Calu3 (cell line): ENCODE measurements at regions of chr7 and their contacts with region 1.

Region 1: DNA sequence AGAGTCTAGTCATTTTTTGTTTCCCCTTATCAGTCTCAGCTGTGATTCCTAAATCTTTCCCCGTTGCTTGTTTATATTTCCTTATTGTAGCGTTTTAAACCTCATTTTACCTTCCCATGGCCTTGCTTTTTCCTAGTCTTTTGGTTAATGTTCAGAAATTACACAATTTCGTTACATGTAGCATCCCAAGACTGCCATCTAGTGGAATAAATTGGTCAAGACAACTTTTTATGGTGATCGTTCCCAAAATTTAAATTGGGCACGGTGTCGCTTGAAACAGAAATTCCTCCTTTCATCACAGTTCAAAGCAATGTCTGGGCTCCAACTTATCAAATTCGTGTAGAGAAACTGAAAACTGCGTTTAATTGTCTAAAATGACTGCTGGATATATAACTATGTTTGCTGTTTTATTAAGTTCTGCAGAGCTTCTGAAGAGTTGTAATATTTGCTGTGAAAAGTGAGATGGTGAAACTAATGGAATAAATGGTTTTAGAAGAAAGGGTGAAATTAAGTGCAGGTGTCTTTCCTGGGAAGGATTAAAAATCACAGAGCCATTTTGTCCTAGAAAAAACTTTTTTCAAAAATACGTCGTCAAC is 370.2 kb downstream of the PHF14 start:
- DNase-seq: peak; percentile 31
- H3K4me3 Mint-ChIP-seq: no peak overlapping the region
- H3K27ac Mint-ChIP-seq: no peak overlapping the region
- H3K4me1 Mint-ChIP-seq: peaks cover 9% of the 10 kb centered on the region
- H3K27me3 Mint-ChIP-seq: no peaks in the 10 kb centered on the region
- CTCF ChIP-seq: peak; percentile 80

Region 2: DNA sequence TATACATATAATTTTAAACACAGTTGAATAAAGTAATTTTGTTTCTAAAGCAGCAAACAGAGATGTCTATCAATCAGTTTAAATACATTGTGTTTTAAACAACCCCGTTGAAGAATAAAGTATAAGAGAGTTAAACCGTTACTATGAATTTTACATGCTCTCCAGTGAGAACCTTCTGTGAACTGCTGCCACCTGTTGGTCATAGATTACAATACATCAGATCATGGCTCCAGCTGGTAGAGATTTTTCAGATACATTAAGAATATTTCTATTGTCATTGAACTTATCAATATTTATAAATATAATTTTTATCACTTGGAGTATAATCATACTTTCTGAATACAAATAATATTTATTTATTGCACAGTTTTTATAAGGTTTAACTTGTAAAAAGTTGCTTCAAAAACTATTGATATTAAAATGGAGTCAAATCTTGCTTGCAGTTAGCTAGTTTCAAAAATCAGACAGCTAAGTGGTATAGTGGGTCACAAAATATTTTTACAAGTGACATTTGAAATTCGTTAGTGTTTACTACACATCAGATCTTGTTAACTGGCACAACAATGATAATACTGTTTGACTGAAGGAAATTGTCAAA is 931.4 kb before region 1 on chr7:
- CTCF ChIA-PET with region 1: no interaction called
- intact Hi-C with region 1: loop called (anchors 10 kb)
- DNase-seq: peak; percentile 49
- H3K4me3 Mint-ChIP-seq: no peak overlapping the region
- H3K27ac Mint-ChIP-seq: no peak overlapping the region
- H3K4me1 Mint-ChIP-seq: no peaks in the 10 kb centered on the region
- H3K27me3 Mint-ChIP-seq: no peaks in the 10 kb centered on the region
- CTCF ChIP-seq: peak; percentile 50

Region 3: DNA sequence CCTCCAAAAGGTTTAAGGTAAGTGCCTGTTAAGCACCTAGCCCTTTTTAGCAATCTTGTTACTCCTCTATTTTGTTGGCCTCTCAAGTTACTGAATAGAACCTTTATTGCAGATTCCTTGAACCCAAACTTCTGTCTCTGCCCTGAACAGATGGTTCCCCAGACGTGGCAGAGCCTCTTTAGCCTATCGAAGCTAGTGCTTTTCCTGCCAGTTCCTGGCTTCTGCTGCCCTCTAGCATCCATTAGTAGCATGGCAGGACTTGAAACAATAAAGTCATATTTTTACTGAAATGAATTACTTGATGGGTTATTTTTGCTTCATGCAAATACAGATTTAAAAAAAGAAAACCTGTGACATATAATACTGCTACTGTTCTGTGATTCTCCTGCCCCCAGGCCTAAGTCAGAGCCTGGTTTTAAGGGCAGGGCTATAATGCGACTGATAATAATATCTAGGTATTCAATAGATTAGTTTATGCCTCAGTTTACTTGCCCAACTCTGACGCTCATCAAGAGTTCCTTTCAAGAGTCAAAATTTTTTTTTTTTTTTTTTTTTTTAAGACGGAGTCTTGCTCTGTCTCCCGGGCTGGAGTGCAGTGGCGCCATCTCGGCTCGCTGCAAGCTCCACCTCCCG is 454.5 kb before region 1 on chr7:
- CTCF ChIA-PET with region 1: no interaction called
- intact Hi-C with region 1: loop called (anchors 5 kb)
- DNase-seq: peak; percentile 39
- H3K4me3 Mint-ChIP-seq: no peak overlapping the region
- H3K27ac Mint-ChIP-seq: no peak overlapping the region
- H3K4me1 Mint-ChIP-seq: no peaks in the 10 kb centered on the region
- H3K27me3 Mint-ChIP-seq: no peaks in the 10 kb centered on the region
- CTCF ChIP-seq: peak; percentile 68

Region 4: DNA sequence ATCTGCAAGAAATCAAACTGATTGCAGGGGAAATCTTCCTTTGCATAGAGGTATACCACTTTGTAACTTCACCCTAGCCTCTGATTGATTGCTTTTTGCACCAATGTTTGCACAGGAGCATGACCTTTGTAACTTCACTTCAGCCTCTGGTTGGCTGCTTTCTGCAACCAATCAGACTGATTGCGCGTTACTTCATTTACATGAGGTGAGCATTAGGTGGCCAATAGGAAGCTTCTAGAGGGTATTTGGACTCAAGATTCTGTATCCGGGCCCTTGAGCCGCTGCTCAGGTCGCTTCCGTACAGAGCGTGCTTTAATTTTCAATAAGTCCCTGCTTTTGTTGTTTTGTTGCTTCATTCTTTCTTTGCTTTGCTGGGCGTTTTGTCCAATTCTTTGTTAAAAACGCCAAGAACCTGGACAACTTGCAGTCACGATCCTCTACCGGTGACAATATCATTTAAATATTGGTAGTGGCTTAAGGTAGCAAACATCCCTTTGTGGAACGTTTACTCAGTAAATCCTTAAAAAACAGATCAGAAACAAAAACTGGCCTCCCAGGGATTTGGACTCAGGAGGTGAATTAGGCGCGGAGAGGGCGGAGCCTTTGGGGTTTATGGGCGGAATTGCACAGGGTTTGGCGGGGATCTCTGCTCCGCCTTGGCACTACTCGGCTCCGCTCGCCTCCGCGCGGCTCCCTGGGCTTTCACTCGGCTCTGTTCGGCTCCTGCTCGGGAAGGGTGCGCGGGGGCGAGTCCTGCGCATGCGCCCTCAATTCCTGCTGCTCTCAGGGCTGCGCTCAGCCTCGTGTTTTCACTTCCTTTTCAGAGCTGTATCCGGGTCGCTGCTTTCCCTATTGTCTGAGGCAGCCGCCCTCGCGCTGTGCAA is 370.6 kb before region 1 on chr7 and contains the start of gene PHF14:
- CTCF ChIA-PET with region 1: no interaction called
- intact Hi-C with region 1: loop called (anchors 10 kb)
- DNase-seq: peak; percentile 97
- H3K4me3 Mint-ChIP-seq: peak within 1 kb of the TSS; percentile 76
- H3K27ac Mint-ChIP-seq: peak within 1 kb of the TSS; percentile 75
- H3K4me1 Mint-ChIP-seq: peaks cover 9% of the 10 kb centered on the region
- H3K27me3 Mint-ChIP-seq: no peaks in the 10 kb centered on the region
- CTCF ChIP-seq: no peak
- total RNA-seq, gene PHF14: 37.7 and 40.2 TPM in 2 replicates

Region 5: DNA sequence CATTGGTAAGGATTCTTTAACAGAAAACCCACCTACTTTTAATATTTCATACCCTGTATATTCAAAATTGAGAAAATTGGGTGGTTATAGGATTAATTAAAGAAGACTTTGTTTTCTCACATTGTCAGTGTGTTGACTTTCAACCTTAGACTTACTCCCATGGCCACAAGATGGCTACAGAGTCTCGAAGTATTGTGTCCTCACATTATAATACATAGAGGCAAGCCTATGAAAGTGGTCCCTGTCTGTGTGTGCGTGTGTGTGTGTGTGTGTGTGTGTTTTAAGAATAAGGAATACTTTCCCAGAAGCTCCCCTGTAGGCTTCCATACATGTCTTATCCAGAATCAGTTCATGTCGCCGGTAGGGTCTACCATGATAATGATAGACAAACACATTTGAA is 190.2 kb before region 1 on chr7:
- CTCF ChIA-PET with region 1: no interaction called
- intact Hi-C with region 1: loop called (anchors 10 kb)
- DNase-seq: no peak
- H3K4me3 Mint-ChIP-seq: no peak overlapping the region
- H3K27ac Mint-ChIP-seq: no peak overlapping the region
- H3K4me1 Mint-ChIP-seq: no peaks in the 10 kb centered on the region
- H3K27me3 Mint-ChIP-seq: no peaks in the 10 kb centered on the region
- CTCF ChIP-seq: no peak

Region 6: GRCh38 chr7:11212080-11212711 is 131.7 kb before region 1 on chr7:
- CTCF ChIA-PET with region 1: interaction called, 3 read pairs
- intact Hi-C with region 1: loop called (anchors 5 kb)
- DNase-seq: peak; percentile 57
- H3K4me3 Mint-ChIP-seq: no peak overlapping the region
- H3K27ac Mint-ChIP-seq: no peak overlapping the region
- H3K4me1 Mint-ChIP-seq: no peaks in the 10 kb centered on the region
- H3K27me3 Mint-ChIP-seq: no peaks in the 10 kb centered on the region
- CTCF ChIP-seq: peak; percentile 65

Region 7: GRCh38 chr7:11237742-11238141 is 106.2 kb before region 1 on chr7:
- CTCF ChIA-PET with region 1: no interaction called
- intact Hi-C with region 1: loop called (anchors 5 kb)
- DNase-seq: peak; percentile 36
- H3K4me3 Mint-ChIP-seq: peak overlapping the region; percentile 66
- H3K27ac Mint-ChIP-seq: no peak overlapping the region
- H3K4me1 Mint-ChIP-seq: no peaks in the 10 kb centered on the region
- H3K27me3 Mint-ChIP-seq: no peaks in the 10 kb centered on the region
- CTCF ChIP-seq: no peak

Region 8: GRCh38 chr7:11486271-11486670 is 142.4 kb after region 1 on chr7:
- CTCF ChIA-PET with region 1: no interaction called
- intact Hi-C with region 1: no loop called
- DNase-seq: no peak
- H3K4me3 Mint-ChIP-seq: no peak overlapping the region
- H3K27ac Mint-ChIP-seq: no peak overlapping the region
- H3K4me1 Mint-ChIP-seq: no peaks in the 10 kb centered on the region
- H3K27me3 Mint-ChIP-seq: no peaks in the 10 kb centered on the region
- CTCF ChIP-seq: no peak